A673 (cell line): ENCODE measurements at regions of chr12 and their contacts with region 1.

Region 1: DNA sequence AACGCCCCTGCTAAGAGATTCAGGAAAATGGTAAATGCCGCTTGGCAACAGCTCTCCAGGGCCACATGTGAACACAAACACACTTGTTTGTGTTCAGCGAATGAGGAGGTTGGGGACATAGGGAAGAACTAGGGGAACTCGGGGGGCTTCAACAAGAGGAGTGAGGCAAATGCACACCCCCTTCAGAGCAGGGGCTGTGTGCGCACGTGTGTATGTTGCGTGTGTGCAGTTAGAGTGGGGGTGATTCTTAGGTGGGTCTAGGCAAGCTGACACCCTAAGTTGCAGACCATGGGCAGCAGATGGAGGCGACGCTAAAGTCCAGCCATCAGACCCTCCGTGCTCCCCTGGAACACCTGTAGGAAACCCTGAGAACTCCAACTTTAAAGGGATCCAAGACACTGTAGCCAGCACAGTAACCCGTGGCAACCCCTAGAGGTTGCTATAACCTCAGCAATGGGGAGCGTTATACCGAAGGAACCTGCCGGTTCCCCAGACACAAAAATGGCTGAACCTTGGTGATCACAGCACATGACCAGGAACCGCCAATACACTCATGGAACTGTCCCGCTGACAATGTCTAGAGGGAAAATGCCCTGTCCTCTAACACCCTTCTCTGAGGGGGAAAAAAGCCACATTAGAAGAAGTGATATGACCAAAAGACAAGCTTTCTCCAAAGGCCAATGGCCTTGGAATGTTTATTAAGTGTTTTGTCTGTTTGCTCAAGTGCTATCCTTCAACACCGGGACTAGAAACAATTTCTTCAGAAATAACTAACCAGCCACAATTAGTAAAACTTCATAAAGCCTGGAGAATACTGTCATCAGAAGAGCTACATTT is 86.5 kb upstream of the CEP83 start:
- DNase-seq: peak; percentile 40
- H3K4me3 ChIP-seq: no peak overlapping the region
- H3K27ac ChIP-seq: no peak overlapping the region
- H3K4me1 ChIP-seq: no peaks in the 10 kb centered on the region
- H3K27me3 ChIP-seq: no peaks in the 10 kb centered on the region
- CTCF ChIP-seq: peak; percentile 59

Region 2: GRCh38 chr12:93722835-93723538 is 823.2 kb before region 1 on chr12:
- CTCF ChIA-PET with region 1: no interaction called
- POLR2A ChIA-PET with region 1: no interaction called
- intact Hi-C with region 1: no loop called
- DNase-seq: peak; percentile 26
- H3K4me3 ChIP-seq: no peak overlapping the region
- H3K27ac ChIP-seq: no peak overlapping the region
- H3K4me1 ChIP-seq: no peaks in the 10 kb centered on the region
- H3K27me3 ChIP-seq: no peaks in the 10 kb centered on the region
- CTCF ChIP-seq: no peak

Region 3: GRCh38 chr12:94762259-94762942 is 216.2 kb after region 1 on chr12:
- CTCF ChIA-PET with region 1: no interaction called
- POLR2A ChIA-PET with region 1: no interaction called
- intact Hi-C with region 1: loop called (anchors 10 kb)
- DNase-seq: no peak
- H3K4me3 ChIP-seq: no peak overlapping the region
- H3K27ac ChIP-seq: no peak overlapping the region
- H3K4me1 ChIP-seq: no peaks in the 10 kb centered on the region
- H3K27me3 ChIP-seq: no peaks in the 10 kb centered on the region
- CTCF ChIP-seq: no peak

Region 4: GRCh38 chr12:94875525-94875924 is 329.4 kb after region 1 on chr12:
- CTCF ChIA-PET with region 1: no interaction called
- POLR2A ChIA-PET with region 1: no interaction called
- intact Hi-C with region 1: loop called (anchors 10 kb)
- DNase-seq: no peak
- H3K4me3 ChIP-seq: no peak overlapping the region
- H3K27ac ChIP-seq: no peak overlapping the region
- H3K4me1 ChIP-seq: no peaks in the 10 kb centered on the region
- H3K27me3 ChIP-seq: peaks cover 74% of the 10 kb centered on the region
- CTCF ChIP-seq: peak; percentile 38